ENCODE measurements at regions of chr14 and their contacts with region 1.

Region 1: DNA sequence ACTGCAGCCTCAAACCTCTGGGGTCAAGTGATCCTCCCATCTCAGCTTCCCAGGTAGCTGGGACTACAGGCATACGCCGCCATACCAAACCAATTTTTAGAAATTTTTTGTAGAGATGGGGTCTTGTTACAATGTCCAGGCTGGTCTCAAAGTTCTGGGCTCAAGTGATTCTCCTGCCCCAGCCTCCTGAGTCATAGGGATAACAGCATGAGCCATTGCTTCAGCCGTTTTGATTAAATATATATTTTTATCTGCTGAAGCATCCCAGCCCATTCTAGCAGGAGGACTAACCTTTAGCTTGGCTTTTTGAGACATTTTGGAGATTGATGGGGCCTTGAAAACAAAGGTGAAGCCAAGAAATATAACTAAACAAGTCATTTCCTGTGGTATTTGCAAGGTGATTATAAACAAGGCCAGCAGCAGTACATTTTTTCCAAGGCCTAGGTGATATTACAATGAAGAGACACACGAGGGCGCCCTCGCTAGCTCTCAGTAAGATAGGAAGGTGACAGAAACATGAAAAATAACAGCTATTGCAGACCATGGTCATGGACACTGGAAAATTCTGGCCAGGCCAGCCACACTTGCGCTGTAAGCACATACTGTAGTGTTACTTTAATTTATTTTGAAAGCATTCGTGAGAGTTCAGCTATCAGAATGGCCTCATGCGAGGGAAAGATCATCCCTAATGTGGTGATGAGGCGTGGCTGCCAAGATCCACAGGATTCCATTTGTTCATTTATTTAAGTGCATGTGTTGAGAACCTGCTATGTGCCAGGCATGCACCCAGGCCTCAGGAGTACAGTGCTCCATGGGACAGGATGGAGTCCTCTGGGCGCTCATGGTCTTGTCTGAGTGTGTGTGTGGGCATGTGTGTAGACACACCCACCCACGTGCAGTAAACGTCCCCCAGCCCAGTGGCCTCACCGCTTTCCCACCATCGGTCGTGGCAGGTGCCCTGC is 63.5 kb downstream of the DGLUCY start:
- DNase-seq: peak in 1 of 2 donors; percentile 57
- ATAC-seq: peak; percentile 61

Region 2: GRCh38 chr14:90883782-90884181 is 293.6 kb before region 1 on chr14:
- intact Hi-C with region 1: no loop called
- DNase-seq: no peak
- ATAC-seq: no peak

Region 3: GRCh38 chr14:91286530-91286937 is 109.2 kb after region 1 on chr14:
- intact Hi-C with region 1: loop called (anchors 5 to 10 kb)
- DNase-seq: peak in 1 of 2 donors; percentile 82
- ATAC-seq: peak; percentile 84

Measured in left colon (tissue), 2 donors.